CD4-positive, alpha-beta memory T cell (primary cell): ENCODE measurements at regions of chr3 and their contacts with region 1.

Region 1: DNA sequence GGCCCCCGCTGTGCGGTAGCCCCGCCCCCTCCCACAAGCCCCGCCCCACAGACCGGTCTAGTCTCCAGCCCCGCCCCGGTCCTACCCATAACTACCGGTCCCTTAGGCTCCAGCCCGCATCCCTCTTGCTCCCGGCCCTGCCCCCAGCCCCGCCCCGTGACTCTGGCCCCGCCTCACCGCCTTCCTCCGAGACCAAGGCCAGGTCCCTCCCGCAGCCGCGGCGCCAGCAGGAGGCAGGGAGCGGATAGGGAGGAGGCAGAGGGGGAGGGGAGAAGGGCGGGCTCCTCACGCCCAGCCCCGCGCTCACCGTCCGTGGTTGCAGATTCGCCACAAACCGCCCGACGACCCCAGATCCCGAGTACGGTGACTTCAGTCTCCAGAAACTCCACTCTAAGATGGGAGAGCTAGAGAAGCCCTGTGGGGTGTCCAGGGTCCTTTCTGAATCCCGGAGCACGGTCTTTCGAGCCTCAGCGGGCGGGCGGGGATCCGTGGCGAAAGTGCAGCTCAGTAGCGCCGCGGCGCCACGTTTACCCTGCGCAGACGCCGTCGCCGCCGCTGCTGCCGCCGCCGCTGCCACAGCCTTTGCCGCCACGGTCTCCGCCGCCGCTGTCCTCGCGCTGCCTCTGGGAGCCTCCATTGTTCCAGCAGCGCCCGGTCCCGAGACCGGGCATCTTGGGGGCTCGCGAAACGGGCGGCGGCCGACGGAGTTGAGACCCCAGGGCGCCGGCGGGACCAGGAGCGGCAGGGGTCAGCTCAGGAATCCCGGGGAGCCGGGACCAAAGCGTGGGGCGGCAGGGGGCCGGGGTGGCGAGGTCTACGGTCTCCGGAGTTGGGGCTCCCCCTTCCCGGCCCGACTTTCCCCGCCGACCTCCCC is at the start of gene BRPF1:
- DNase-seq: peak; percentile 98 to 100 (median 98)
- H3K4me3 ChIP-seq: peak within 1 kb of the TSS; percentile 48 to 96
- H3K4me3 Mint-ChIP-seq: peak within 1 kb of the TSS; percentile 89 to 98 (median 93)
- H3K27ac ChIP-seq: peak within 1 kb of the TSS; percentile 77
- H3K27ac Mint-ChIP-seq: peak within 1 kb of the TSS; percentile 93 to 98 (median 95)
- H3K4me1 ChIP-seq: peaks cover 64% of the 10 kb centered on the region
- H3K4me1 Mint-ChIP-seq: peaks cover 47 to 75% (median 59%) of the 10 kb centered on the region in 4 donors
- H3K27me3 ChIP-seq: no peaks in the 10 kb centered on the region
- H3K27me3 Mint-ChIP-seq: no peaks in the 10 kb centered on the region
- total RNA-seq, gene BRPF1: 40.4 to 40.5 TPM

Region 2: DNA sequence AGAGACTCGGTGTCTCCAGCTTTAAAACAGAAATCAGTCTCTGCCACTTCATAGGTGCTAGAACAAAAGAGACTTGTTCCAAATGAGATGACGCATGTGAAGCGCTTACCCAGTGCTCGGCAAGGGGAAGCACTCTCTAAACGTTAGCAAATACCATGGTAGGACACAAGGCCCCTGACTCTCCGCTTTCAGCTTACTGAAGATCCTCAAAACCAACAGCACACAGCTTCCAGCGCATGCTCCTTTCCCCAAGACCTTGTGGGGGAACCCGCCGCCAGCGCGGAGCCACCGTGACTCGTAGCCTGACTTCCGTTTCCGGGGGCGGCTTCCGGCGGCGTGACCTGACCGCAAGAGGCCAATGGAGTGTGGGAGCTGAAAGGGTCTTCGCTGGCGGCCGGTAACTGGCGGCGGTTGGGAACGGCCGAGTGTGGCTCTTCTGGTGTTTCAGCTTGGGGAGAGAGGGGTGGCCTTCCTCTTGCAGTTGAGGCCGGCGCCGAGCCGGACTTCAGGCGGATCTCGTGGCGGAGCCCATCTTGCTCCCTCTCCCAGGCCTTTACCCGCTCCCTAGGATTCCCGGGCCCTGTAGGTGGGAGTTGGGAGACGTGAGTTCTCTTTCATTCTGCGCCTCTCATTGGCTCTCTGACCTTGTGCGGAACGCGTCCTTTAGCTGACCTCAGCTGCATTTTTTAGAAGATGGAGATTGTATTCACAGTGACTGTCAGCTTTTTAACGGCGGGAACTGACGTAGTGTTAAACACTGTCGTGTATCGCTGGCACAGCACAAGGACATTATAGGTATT is 368.5 kb before region 1 on chr3 and contains the start of gene THUMPD3:
- CTCF ChIA-PET with region 1: no interaction called
- POLR2A ChIA-PET with region 1: interaction called, 10 read pairs
- intact Hi-C with region 1: loop called (anchors 1 kb)
- DNase-seq: peak; percentile 82 to 91 (median 85)
- H3K4me3 ChIP-seq: peak within 1 kb of the TSS; percentile 92 to 96
- H3K4me3 Mint-ChIP-seq: peak within 1 kb of the TSS; percentile 95 to 99 (median 98)
- H3K27ac ChIP-seq: peak within 1 kb of the TSS; percentile 91
- H3K27ac Mint-ChIP-seq: peak within 1 kb of the TSS; percentile 95 to 99 (median 98)
- H3K4me1 ChIP-seq: peaks cover 22% of the 10 kb centered on the region
- H3K4me1 Mint-ChIP-seq: peaks cover 7 to 38% (median 17%) of the 10 kb centered on the region in 4 donors
- H3K27me3 ChIP-seq: no peaks in the 10 kb centered on the region
- H3K27me3 Mint-ChIP-seq: no peaks in the 10 kb centered on the region
- total RNA-seq, gene THUMPD3: 36.9 to 39.2 TPM

Region 3: DNA sequence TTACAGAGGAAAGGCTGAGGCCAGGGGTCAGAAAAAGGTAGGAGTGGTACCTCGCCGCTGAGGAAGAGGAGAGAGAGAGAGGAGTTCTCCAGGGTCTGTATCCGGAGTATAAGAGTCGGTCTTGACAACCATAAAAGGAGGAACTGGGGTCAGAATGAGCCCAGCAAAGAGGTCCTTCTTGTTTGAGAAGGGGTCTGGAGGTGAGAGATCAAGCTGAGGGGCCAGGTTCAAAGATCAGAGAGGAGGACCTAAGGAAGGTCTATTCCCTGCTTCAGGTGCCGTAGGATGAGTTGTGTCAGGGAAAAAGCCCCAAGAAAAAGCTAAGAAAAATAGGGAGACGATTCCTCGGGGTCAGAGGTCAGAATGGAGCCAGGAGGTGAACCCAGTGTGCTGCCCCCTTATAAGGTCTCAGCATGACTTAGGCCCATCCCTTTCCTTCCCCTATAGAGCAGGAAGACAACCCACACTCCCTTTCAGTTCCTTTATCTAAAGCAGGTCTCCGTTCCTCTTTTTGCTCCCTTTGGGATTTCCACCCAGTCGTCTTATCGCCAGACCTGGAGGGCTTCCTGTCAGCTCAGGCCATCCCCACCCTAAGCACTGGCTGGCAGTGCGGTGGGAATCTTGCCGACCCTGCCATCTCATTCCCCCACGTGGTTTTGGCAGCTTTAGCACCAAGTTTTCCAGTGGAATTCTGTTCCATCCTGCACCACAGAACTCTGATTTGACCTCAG is 81.5 kb before region 1 on chr3:
- CTCF ChIA-PET with region 1: interaction called, 9 read pairs
- POLR2A ChIA-PET with region 1: interaction called, 23 read pairs
- intact Hi-C with region 1: loop called (anchors 1 kb)
- DNase-seq: peak in 1 of 5 donors; percentile 46
- H3K4me3 ChIP-seq: peak overlapping the region; percentile 97
- H3K4me3 Mint-ChIP-seq: peak overlapping the region; percentile 91 to 99 (median 96)
- H3K27ac ChIP-seq: peak overlapping the region; percentile 77
- H3K27ac Mint-ChIP-seq: peak overlapping the region; percentile 89 to 97 (median 91)
- H3K4me1 ChIP-seq: peaks cover 37% of the 10 kb centered on the region
- H3K4me1 Mint-ChIP-seq: peaks cover 19 to 50% (median 30%) of the 10 kb centered on the region in 4 donors
- H3K27me3 ChIP-seq: no peaks in the 10 kb centered on the region
- H3K27me3 Mint-ChIP-seq: peaks cover 0 to 1% of the 10 kb centered on the region in 2 donors

Region 4: DNA sequence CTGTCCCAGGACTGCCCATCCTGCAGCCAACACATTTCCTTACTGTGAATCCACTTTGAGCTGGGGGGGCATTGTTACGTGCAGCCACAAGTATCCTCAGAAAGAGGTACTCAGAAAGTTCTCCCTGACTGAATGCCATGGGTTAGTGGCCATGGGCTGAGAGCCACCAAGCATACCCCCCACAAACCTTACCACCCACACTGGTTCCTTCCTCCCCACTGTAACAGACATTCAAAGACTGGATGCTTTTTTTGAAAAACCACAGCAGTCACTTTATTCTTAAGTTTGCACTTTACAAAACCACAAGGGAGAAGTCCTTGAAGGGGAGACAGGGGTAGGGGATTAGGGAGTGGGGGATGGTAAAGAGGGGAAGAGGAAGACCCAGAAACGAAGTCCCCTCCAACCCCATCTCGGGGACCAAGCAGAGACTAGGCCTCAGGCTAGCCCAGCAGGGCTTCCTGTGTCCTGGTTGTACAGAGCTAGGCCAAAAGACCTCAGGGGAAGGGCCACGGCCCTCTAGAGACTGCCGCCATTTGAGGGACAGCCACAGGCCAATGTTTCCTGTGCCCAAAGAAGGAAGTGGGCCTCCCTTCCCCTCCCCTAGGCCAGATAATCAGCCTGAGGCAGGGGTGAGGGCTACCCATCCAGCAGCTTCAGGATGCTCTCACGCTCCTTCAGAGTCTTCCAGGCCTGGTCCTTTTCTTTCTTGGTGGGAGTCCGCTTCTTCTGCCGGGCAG is 48.4 kb after region 1 on chr3:
- CTCF ChIA-PET with region 1: interaction called, 3 read pairs
- POLR2A ChIA-PET with region 1: interaction called, 11 read pairs
- intact Hi-C with region 1: no loop called
- DNase-seq: peak in 4 of 5 donors; percentile 19 to 50 (median 36)
- H3K4me3 ChIP-seq: peak overlapping the region in 1 of 2 donors; percentile 2
- H3K4me3 Mint-ChIP-seq: peak overlapping the region in 7 of 8 donors; percentile 39 to 77 (median 69)
- H3K27ac ChIP-seq: peak overlapping the region; percentile 50
- H3K27ac Mint-ChIP-seq: peak overlapping the region; percentile 73 to 90 (median 89)
- H3K4me1 ChIP-seq: peaks cover 45% of the 10 kb centered on the region
- H3K4me1 Mint-ChIP-seq: peaks cover 40 to 57% (median 48%) of the 10 kb centered on the region in 4 donors
- H3K27me3 ChIP-seq: no peaks in the 10 kb centered on the region
- H3K27me3 Mint-ChIP-seq: no peaks in the 10 kb centered on the region

Region 5: GRCh38 chr3:10115326-10116137 is 384.1 kb after region 1 on chr3 and contains the start of gene BRK1:
- CTCF ChIA-PET with region 1: no interaction called
- POLR2A ChIA-PET with region 1: no interaction called
- intact Hi-C with region 1: loop called (anchors 2 kb)
- DNase-seq: peak; percentile 89 to 95 (median 93)
- H3K4me3 ChIP-seq: peak within 1 kb of the TSS; percentile 89 to 98
- H3K4me3 Mint-ChIP-seq: peak within 1 kb of the TSS; percentile 95 to 100 (median 99)
- H3K27ac ChIP-seq: peak within 1 kb of the TSS; percentile 84
- H3K27ac Mint-ChIP-seq: peak within 1 kb of the TSS; percentile 96 to 100 (median 98)
- H3K4me1 ChIP-seq: peaks cover 39% of the 10 kb centered on the region
- H3K4me1 Mint-ChIP-seq: peaks cover 22 to 52% (median 31%) of the 10 kb centered on the region in 4 donors
- H3K27me3 ChIP-seq: no peaks in the 10 kb centered on the region
- H3K27me3 Mint-ChIP-seq: peaks cover 0 to 1% of the 10 kb centered on the region in 2 donors
- total RNA-seq, gene BRK1: 73.0 to 78.1 TPM

Region 6: GRCh38 chr3:10322352-10322710 is 590.9 kb after region 1 on chr3:
- CTCF ChIA-PET with region 1: no interaction called
- POLR2A ChIA-PET with region 1: no interaction called
- intact Hi-C with region 1: loop called (anchors 5 kb)
- DNase-seq: peak in 3 of 5 donors; percentile 22 to 33 (median 23)
- H3K4me3 ChIP-seq: no peak overlapping the region
- H3K4me3 Mint-ChIP-seq: peak overlapping the region in 3 of 8 donors; percentile 20 to 92 (median 46)
- H3K27ac ChIP-seq: no peak overlapping the region
- H3K27ac Mint-ChIP-seq: peak overlapping the region in 5 of 7 donors; percentile 81 to 97 (median 86)
- H3K4me1 ChIP-seq: peaks cover 28% of the 10 kb centered on the region
- H3K4me1 Mint-ChIP-seq: peaks cover 18 to 42% (median 29%) of the 10 kb centered on the region in 4 donors
- H3K27me3 ChIP-seq: peaks cover 6% of the 10 kb centered on the region
- H3K27me3 Mint-ChIP-seq: peaks cover 2 to 5% of the 10 kb centered on the region in 2 donors